HepG2 (cell line): ENCODE measurements at regions of chr22 and their contacts with region 1.

Region 1: DNA sequence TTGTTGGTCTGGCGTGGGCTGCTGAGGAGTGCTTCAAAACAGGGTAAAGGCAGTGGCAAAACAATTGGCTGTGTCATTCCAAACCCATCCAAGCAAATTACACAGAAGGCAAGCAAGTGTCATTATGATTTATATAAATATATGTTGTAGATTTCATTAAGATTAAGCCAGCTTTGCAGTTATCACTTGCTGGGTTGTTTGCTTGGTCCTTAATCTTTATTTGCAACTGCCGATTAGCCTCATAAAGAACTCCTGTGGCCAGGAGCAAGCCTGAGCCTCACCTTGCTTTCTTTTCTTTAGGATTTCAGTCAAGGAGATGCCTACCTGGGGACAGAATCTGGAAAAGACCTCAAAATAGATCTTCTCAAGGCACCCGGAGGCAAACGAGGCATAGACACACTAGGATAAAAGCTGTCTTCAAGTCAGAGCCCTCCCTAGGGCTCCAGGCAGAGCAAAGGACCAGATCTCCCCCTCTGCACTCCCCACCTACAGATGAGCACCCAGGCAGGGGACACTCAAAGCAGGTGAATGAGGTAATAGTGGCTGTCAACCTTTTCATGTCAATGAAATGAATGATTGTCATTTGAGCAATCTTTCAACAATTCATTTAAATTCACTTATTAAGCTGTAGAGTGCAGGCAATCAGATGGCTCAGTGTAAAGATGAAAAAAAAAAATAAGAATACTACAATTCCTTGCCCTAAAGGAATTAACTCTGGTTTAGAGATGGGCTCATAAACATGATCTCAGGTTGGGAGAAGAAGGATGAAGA is 428.0 kb upstream of the ISX start:
- DNase-seq: no peak
- ATAC-seq: no peak
- H3K4me3 ChIP-seq: no peak overlapping the region
- H3K27ac ChIP-seq: no peak overlapping the region
- H3K4me1 ChIP-seq: no peaks in the 10 kb centered on the region
- H3K27me3 ChIP-seq: peaks cover 0 to 6% of the 10 kb centered on the region in 2 experiments; a peak in 1 of 5 replicates
- CTCF ChIP-seq: no peak
- EP300 ChIP-seq: no peak
- POLR2A ChIP-seq: no peak
- RAD21 ChIP-seq: no peak

Region 2: GRCh38 chr22:34567367-34567766 is 70.6 kb before region 1 on chr22:
- CTCF ChIA-PET with region 1: no interaction called
- POLR2A ChIA-PET with region 1: no interaction called
- in situ Hi-C with region 1: no loop called
- intact Hi-C with region 1: no loop called
- DNase-seq: no peak
- ATAC-seq: no peak
- H3K4me3 ChIP-seq: no peak overlapping the region
- H3K27ac ChIP-seq: no peak overlapping the region
- H3K4me1 ChIP-seq: no peaks in the 10 kb centered on the region
- H3K27me3 ChIP-seq: no peaks in the 10 kb centered on the region; a peak in 1 of 5 replicates
- CTCF ChIP-seq: no peak
- EP300 ChIP-seq: no peak
- POLR2A ChIP-seq: no peak
- RAD21 ChIP-seq: no peak

Region 3: DNA sequence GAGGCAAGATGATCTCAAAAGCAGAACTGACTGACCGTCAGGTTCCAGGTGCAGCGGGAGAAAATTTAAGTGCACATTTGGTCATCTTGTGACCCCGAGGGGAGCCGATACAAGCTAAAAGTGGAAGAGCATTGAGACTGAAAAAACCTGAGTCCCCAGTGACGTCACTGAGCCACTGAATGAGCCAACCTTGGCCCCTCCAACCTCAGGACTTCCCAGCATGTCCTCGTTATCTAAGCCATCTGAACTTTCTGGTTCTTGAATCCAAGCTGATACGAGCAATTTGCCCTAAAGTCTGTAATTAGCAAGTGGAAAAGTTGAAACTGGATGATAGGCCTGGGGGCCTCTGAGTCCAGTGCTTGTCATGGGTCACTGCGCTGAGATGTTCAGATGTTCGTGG is 376.9 kb after region 1 on chr22:
- CTCF ChIA-PET with region 1: no interaction called
- POLR2A ChIA-PET with region 1: no interaction called
- in situ Hi-C with region 1: no loop called
- intact Hi-C with region 1: loop called (anchors 5 kb)
- DNase-seq: no peak
- ATAC-seq: no peak
- H3K4me3 ChIP-seq: no peak overlapping the region
- H3K27ac ChIP-seq: no peak overlapping the region
- H3K4me1 ChIP-seq: no peaks in the 10 kb centered on the region
- H3K27me3 ChIP-seq: peaks cover 1 to 26% of the 10 kb centered on the region in 2 experiments; a peak in 2 of 5 replicates
- CTCF ChIP-seq: no peak
- EP300 ChIP-seq: no peak
- POLR2A ChIP-seq: no peak
- RAD21 ChIP-seq: no peak